ENCODE measurements at regions of chr10 and their contacts with region 1.

Region 1: GRCh38 chr10:7525314-7526016 is 114.6 kb upstream of the SFMBT2 start:
- DNase-seq: peak; percentile 63
- H3K4me3 ChIP-seq: no peak overlapping the region
- H3K27ac ChIP-seq: no peak overlapping the region
- H3K4me1 ChIP-seq: no peaks in the 10 kb centered on the region
- H3K27me3 ChIP-seq: no peaks in the 10 kb centered on the region
- CTCF ChIP-seq: peak; percentile 68 to 82 (median 79)
- EP300 ChIP-seq: no peak
- POLR2A ChIP-seq: no peak

Region 2: DNA sequence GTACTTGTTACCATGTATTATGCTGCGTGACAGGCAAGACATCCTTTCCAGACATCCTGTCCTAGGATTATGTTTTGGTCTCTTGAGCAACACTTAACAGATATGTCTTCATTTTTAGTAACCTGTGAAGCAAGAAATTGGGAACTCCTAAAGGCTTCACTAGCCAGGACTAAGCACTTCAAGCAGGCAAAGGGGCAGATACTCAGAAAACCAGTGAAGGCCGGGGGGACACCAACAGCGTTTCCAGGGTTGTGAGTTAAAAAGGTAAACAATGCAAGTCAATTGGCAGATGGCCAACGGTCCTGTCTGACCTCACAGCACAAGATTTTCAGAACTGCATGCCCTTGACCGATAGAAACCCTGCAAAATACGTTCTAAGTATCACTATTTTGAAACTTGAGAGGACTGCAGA is 37.0 kb before region 1 on chr10:
- in situ Hi-C with region 1: no loop called
- intact Hi-C with region 1: no loop called
- DNase-seq: peak; percentile 39
- H3K4me3 ChIP-seq: no peak overlapping the region
- H3K27ac ChIP-seq: peak overlapping the region in 2 of 4 donors; percentile 10 to 32
- H3K4me1 ChIP-seq: no peaks in the 10 kb centered on the region
- H3K27me3 ChIP-seq: no peaks in the 10 kb centered on the region
- CTCF ChIP-seq: no peak
- EP300 ChIP-seq: peak; percentile 12
- POLR2A ChIP-seq: no peak

Region 3: GRCh38 chr10:7687228-7687907 is 161.9 kb after region 1 on chr10:
- in situ Hi-C with region 1: loop called (anchors 5 kb)
- intact Hi-C with region 1: loop called (anchors 2 kb)
- DNase-seq: peak; percentile 81
- H3K4me3 ChIP-seq: no peak overlapping the region
- H3K27ac ChIP-seq: no peak overlapping the region
- H3K4me1 ChIP-seq: no peaks in the 10 kb centered on the region
- H3K27me3 ChIP-seq: no peaks in the 10 kb centered on the region
- CTCF ChIP-seq: peak; percentile 79 to 87 (median 83)
- EP300 ChIP-seq: no peak
- POLR2A ChIP-seq: no peak

Region 4: GRCh38 chr10:9302120-9302746 is 1776.8 kb after region 1 on chr10:
- in situ Hi-C with region 1: loop called in 2 of 4 experiments (anchors 10 to 25 kb)
- intact Hi-C with region 1: no loop called
- DNase-seq: no peak
- H3K4me3 ChIP-seq: no peak overlapping the region
- H3K27ac ChIP-seq: no peak overlapping the region
- H3K4me1 ChIP-seq: no peaks in the 10 kb centered on the region
- H3K27me3 ChIP-seq: no peaks in the 10 kb centered on the region
- CTCF ChIP-seq: peak in 4 of 5 experiments; percentile 28 to 51 (median 35)
- EP300 ChIP-seq: no peak
- POLR2A ChIP-seq: no peak